ENCODE measurements at regions of chr18 and their contacts with region 1.

Region 1: DNA sequence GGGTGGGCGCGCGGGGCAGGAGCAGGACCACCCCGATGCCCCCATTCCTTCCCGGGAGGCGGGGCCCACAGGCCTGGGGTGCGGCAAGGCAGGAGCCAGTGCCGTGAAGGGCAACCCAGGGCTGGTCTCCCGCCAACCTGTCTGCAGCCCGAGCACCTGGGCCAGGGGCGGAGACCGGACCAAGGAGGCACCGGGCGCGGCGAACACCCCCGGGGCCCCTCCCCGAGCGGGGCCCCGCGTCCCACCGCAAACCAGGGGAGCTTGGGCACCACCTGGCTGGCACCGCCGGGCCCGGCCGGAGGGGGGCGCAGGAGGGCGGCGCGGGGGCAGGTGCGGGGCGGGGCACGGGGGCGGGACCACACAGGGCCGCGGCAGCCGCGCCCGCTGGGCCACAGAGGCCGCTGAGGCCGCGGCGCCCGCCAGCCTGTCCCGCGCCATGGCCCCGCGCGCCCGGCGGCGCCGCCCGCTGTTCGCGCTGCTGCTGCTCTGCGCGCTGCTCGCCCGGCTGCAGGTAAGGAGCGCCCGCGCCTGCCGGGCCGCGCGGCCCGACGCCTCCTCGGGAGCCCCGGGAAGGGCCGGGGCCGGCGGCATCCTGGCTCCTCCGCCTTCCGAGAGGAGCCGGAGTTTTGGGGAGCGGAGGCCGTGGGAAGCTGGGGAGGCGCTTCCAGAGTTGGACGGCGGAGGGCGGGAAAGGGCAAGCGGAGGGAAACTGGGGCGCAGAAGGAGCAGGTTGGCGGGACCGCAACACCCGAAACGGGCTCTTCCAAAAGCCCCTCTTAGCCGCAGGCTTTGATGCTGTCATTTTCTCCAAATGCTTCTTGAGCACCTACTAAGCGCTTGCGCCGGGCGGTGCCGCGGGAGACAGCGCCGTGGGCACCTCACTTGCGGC is at the start of gene TNFRSF11A:
- DNase-seq: peak; percentile 73
- H3K4me3 Mint-ChIP-seq: peak within 1 kb of the TSS; percentile 77
- H3K27ac Mint-ChIP-seq: peak within 1 kb of the TSS; percentile 28
- H3K4me1 Mint-ChIP-seq: peaks cover 19% of the 10 kb centered on the region
- H3K27me3 Mint-ChIP-seq: peaks cover 70% of the 10 kb centered on the region
- total RNA-seq, gene TNFRSF11A: 3.1 to 3.5 TPM

Region 2: DNA sequence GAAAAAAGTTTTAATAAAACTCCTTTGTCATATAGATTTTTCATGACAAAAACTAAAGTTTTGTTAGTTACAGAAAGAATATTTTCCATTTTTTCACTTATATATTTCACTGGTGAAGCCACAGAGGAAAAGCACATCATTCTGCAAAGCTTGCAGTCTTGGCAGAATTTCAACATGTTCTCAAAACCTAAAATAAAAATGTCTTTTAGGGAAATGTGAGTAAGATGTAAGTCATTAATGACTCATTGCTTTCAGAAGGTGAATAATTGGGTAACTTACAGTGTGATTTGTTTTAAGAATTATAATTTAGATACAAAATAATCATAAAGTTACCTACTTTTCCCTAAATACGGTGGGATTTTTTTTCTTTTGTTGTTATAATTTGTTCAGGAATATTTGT is 43.5 kb before region 1 on chr18:
- CTCF ChIA-PET with region 1: no interaction called
- intact Hi-C with region 1: loop called (anchors 1 kb)
- DNase-seq: no peak
- H3K4me3 Mint-ChIP-seq: no peak overlapping the region
- H3K27ac Mint-ChIP-seq: no peak overlapping the region
- H3K4me1 Mint-ChIP-seq: peaks cover 39% of the 10 kb centered on the region
- H3K27me3 Mint-ChIP-seq: no peaks in the 10 kb centered on the region

Region 3: DNA sequence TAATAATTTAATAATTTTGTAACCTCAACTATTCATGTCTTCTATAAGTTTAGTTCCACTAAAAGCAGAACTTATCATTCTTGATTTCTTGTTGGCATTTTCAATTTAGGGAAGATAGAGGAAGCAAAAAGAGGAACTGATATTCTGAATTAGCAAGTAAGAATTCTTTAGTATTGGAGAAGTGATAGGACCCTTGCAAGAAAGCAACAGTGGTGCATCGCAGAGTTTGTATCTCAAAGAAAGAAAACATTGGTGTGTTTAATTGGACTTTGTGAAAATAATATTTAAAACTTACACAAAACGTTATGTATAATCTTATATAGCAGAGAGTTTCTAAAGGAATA is 36.5 kb before region 1 on chr18:
- CTCF ChIA-PET with region 1: no interaction called
- intact Hi-C with region 1: loop called (anchors 2 kb)
- DNase-seq: no peak
- H3K4me3 Mint-ChIP-seq: no peak overlapping the region
- H3K27ac Mint-ChIP-seq: no peak overlapping the region
- H3K4me1 Mint-ChIP-seq: peaks cover 32% of the 10 kb centered on the region
- H3K27me3 Mint-ChIP-seq: no peaks in the 10 kb centered on the region

Region 4: GRCh38 chr18:62396381-62396780 is 71.2 kb after region 1 on chr18:
- CTCF ChIA-PET with region 1: no interaction called
- intact Hi-C with region 1: loop called (anchors 2 kb)
- DNase-seq: peak; percentile 40
- H3K4me3 Mint-ChIP-seq: no peak overlapping the region
- H3K27ac Mint-ChIP-seq: peak overlapping the region; percentile 4
- H3K4me1 Mint-ChIP-seq: peaks cover 9% of the 10 kb centered on the region
- H3K27me3 Mint-ChIP-seq: no peaks in the 10 kb centered on the region

Region 5: DNA sequence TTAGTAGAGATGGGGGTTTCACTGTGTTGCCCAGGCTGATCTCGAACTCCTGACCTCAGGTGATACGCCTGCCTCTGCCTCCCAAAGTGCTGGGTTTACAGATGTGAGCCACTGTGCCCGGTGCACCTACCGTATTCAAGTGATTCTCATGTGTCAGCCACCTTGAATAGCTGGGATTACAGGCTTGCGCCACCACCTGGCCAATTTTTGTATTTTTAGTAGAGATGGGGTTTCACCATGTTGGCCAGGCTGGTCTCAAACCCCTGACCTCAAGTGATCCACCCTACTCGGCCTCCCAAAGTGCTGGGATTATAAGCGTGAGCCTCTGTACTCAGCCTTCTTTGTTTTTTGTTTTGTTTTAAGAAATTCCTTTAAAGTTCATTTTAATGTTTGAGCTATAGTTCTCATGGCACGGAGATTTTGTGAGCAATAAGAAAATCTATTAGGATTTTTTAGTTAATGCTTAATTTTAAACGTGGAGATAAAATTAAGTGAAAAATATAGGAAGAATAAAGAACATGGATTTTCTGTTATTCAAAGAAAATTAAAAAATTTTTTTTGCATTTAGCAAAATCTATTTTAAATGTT is 632.8 kb after region 1 on chr18:
- CTCF ChIA-PET with region 1: no interaction called
- intact Hi-C with region 1: loop called (anchors 10 kb)
- DNase-seq: peak; percentile 74
- H3K4me3 Mint-ChIP-seq: no peak overlapping the region
- H3K27ac Mint-ChIP-seq: no peak overlapping the region
- H3K4me1 Mint-ChIP-seq: peaks cover 12% of the 10 kb centered on the region
- H3K27me3 Mint-ChIP-seq: no peaks in the 10 kb centered on the region

Region 6: DNA sequence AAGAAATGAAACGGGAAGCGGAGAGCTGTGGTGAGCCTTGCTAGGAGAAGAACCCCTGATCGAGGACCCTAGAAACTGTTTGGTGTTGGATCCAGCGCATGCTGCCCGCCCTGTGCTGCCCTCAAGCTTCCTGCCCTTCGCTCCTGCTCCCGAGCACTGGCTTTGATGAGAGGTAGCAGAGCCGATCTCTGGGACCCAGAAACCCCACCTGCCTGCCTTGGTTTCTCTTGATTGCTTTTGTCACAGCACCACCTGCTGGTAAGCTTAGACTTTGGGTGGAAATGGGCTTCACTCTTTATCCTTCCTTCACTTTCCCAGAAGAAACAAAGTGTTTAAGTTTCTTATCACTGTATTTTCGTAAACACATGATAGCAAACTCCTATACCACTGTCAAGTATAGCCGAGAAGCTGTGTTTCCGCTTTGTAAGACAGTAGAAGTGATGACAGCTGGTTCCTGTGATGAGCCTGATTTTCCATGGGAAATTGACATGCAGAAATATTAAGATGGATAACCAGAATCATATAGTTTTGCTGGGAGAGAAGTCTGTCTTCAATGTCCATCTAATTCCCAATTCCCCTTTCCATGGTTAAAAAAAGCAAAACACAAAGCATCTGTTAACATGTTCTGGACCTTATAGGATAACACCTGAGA is 657.6 kb after region 1 on chr18:
- CTCF ChIA-PET with region 1: no interaction called
- intact Hi-C with region 1: loop called (anchors 2 kb)
- DNase-seq: peak; percentile 75
- H3K4me3 Mint-ChIP-seq: no peak overlapping the region
- H3K27ac Mint-ChIP-seq: no peak overlapping the region
- H3K4me1 Mint-ChIP-seq: no peaks in the 10 kb centered on the region
- H3K27me3 Mint-ChIP-seq: no peaks in the 10 kb centered on the region

Measured in activated naive CD4-positive, alpha-beta T cell treated with anti-CD3 and anti-CD28 coated beads for 36 hours (primary cell).